MCF 10A (cell line): ENCODE measurements at regions of chr1 and their contacts with region 1.

Region 1: GRCh38 chr1:224329842-224330753 is at the start of gene NVL:
- DNase-seq: peak; percentile 98
- H3K4me3 Mint-ChIP-seq: peak within 1 kb of the TSS; percentile 86
- H3K27ac Mint-ChIP-seq: peak within 1 kb of the TSS; percentile 99
- H3K4me1 Mint-ChIP-seq: peaks cover 33% of the 10 kb centered on the region
- H3K27me3 Mint-ChIP-seq: no peaks in the 10 kb centered on the region
- CTCF ChIP-seq: no peak
- total RNA-seq, gene NVL: 69.8 and 81.5 TPM in 2 replicates

Region 2: DNA sequence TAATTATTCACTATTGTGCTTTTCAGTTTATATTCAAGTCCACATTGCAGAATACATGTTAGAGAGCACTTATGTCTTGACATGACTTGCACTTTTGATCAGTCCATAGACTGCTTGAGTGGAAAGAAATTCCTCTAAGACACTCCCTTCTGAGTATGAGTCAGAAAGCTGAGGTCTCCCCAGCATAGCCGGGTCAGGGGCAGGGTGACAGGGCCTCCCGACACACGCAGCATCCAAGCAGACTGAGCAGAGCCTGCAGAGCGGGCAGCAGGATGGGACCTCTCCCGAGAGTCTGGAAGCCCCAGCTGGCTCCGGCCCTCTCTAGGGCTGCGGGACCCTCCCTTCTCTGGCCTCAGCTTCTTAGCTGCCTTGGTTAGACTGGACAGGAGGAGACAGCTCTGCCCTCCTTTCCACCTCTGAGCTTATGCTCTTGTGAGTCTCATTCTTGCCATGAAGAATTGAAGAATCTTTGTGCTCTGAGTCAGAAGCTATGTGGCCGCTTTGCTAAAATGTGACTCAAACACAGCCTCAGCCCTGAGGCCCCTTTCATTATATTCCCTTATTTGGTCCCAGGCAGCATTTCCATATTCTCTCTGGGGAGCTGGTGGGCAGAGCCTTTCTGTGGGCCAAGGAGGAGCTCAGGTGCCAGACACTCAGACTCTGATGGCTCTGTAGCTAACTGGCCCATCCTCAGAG is 629.0 kb before region 1 on chr1:
- CTCF ChIA-PET with region 1: interaction called, 8 read pairs
- POLR2A ChIA-PET with region 1: interaction called, 30 read pairs
- intact Hi-C with region 1: loop called (anchors 1 kb)
- DNase-seq: peak; percentile 97
- H3K4me3 Mint-ChIP-seq: peak overlapping the region; percentile 47
- H3K27ac Mint-ChIP-seq: peak overlapping the region; percentile 97
- H3K4me1 Mint-ChIP-seq: peaks cover 61% of the 10 kb centered on the region
- H3K27me3 Mint-ChIP-seq: no peaks in the 10 kb centered on the region
- CTCF ChIP-seq: no peak

Region 3: DNA sequence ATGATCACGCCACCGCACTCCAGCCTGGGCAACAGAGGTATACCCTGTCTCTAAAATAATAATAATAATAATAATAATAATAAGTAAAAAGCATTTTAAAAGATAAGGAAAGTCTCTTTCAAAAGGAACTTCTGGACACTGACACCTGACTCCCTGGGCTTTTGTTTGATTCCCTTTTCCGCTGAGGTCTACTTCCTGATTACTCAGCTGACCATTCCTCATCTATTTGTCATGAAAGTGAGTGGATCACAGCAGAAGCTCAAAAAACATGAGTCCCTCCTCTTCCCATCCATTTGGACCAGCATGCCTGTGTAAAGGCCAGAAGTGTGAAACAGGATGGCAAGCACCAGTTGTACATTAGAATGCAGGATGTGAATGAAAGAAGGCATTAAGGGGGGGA is 277.3 kb before region 1 on chr1:
- CTCF ChIA-PET with region 1: interaction called, 17 read pairs
- POLR2A ChIA-PET with region 1: no interaction called
- intact Hi-C with region 1: no loop called
- DNase-seq: peak; percentile 39
- H3K4me3 Mint-ChIP-seq: no peak overlapping the region
- H3K27ac Mint-ChIP-seq: no peak overlapping the region
- H3K4me1 Mint-ChIP-seq: peaks cover 10% of the 10 kb centered on the region
- H3K27me3 Mint-ChIP-seq: no peaks in the 10 kb centered on the region
- CTCF ChIP-seq: no peak

Region 4: GRCh38 chr1:224127925-224128819 is 201.9 kb before region 1 on chr1:
- CTCF ChIA-PET with region 1: interaction called, 4 read pairs
- POLR2A ChIA-PET with region 1: interaction called, 16 read pairs
- intact Hi-C with region 1: no loop called
- DNase-seq: no peak
- H3K4me3 Mint-ChIP-seq: no peak overlapping the region
- H3K27ac Mint-ChIP-seq: no peak overlapping the region
- H3K4me1 Mint-ChIP-seq: peaks cover 24% of the 10 kb centered on the region
- H3K27me3 Mint-ChIP-seq: no peaks in the 10 kb centered on the region
- CTCF ChIP-seq: no peak

Region 5: DNA sequence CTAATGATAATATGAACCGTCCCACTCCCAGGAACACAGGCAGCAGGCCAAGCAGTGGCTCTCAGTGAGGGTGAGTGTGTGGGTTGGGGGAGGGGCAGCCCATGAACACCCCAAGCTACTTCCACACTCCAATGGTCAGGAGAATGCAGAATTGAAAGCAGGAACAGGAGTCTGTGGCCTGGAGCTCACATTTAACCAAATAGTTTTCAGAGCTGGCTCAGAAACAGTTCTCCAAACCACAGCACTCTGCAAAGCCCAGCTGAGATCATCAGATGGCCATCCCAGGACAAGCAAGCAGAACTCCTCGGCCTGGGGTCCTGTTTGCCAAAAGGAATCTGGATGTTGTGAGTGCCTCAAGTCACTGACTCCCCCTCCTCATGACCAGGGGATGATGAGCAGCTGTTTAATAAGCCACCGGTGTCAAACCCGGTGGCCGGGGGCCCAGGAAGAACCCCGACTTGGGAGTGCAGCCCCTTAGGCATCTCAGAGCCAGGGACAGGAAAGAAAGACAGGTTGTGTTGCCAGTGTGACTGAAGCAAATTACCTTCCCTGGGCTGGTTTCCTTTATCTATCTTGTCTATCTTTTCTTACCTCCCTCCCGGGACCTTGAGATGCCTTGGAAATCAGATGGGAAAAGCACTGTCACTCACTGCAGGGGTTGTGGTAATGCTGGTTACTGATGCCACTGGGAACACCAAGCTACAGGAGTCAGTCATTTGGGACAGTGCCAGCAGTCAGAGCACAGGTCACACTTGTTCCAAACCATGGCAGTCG is 126.7 kb before region 1 on chr1:
- CTCF ChIA-PET with region 1: interaction called, 5 read pairs
- POLR2A ChIA-PET with region 1: interaction called, 16 read pairs
- intact Hi-C with region 1: no loop called
- DNase-seq: peak; percentile 62
- H3K4me3 Mint-ChIP-seq: no peak overlapping the region
- H3K27ac Mint-ChIP-seq: no peak overlapping the region
- H3K4me1 Mint-ChIP-seq: peaks cover 21% of the 10 kb centered on the region
- H3K27me3 Mint-ChIP-seq: no peaks in the 10 kb centered on the region
- CTCF ChIP-seq: no peak

Region 6: DNA sequence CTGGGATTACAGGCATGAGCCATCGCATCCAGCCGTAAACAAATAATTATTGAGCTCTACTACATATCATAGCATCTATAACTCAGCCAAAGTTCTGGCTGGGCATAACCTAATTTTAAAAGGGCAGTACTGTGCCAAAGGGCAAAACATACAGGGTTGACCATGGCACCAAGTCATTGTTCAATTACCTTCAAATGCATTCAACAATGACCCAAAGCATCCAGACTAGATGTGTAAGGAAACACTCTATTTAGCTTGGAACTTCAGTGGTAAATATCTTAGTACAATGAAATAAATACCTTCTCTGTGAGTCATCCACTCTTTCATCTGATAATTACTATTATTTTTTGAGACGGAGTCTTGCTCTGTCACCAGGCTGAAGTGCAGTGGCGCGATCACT is 70.2 kb before region 1 on chr1:
- CTCF ChIA-PET with region 1: no interaction called
- POLR2A ChIA-PET with region 1: no interaction called
- intact Hi-C with region 1: no loop called
- DNase-seq: no peak
- H3K4me3 Mint-ChIP-seq: no peak overlapping the region
- H3K27ac Mint-ChIP-seq: no peak overlapping the region
- H3K4me1 Mint-ChIP-seq: no peaks in the 10 kb centered on the region
- H3K27me3 Mint-ChIP-seq: no peaks in the 10 kb centered on the region
- CTCF ChIP-seq: no peak

Region 7: GRCh38 chr1:224343679-224344078 is 13.6 kb after region 1 on chr1:
- CTCF ChIA-PET with region 1: interaction called, 12 read pairs
- POLR2A ChIA-PET with region 1: interaction called, 11 read pairs
- intact Hi-C with region 1: no loop called
- DNase-seq: peak; percentile 34
- H3K4me3 Mint-ChIP-seq: no peak overlapping the region
- H3K27ac Mint-ChIP-seq: no peak overlapping the region
- H3K4me1 Mint-ChIP-seq: peaks cover 5% of the 10 kb centered on the region
- H3K27me3 Mint-ChIP-seq: no peaks in the 10 kb centered on the region
- CTCF ChIP-seq: no peak

Region 8: GRCh38 chr1:224497714-224498573 is 167.8 kb after region 1 on chr1:
- CTCF ChIA-PET with region 1: no interaction called
- POLR2A ChIA-PET with region 1: interaction called, 12 read pairs
- intact Hi-C with region 1: no loop called
- DNase-seq: peak; percentile 97
- H3K4me3 Mint-ChIP-seq: peak overlapping the region; percentile 50
- H3K27ac Mint-ChIP-seq: peak overlapping the region; percentile 86
- H3K4me1 Mint-ChIP-seq: peaks cover 69% of the 10 kb centered on the region
- H3K27me3 Mint-ChIP-seq: no peaks in the 10 kb centered on the region
- CTCF ChIP-seq: peak; percentile 6